ENCODE measurements at regions of chr5 and their contacts with region 1.

Region 1: DNA sequence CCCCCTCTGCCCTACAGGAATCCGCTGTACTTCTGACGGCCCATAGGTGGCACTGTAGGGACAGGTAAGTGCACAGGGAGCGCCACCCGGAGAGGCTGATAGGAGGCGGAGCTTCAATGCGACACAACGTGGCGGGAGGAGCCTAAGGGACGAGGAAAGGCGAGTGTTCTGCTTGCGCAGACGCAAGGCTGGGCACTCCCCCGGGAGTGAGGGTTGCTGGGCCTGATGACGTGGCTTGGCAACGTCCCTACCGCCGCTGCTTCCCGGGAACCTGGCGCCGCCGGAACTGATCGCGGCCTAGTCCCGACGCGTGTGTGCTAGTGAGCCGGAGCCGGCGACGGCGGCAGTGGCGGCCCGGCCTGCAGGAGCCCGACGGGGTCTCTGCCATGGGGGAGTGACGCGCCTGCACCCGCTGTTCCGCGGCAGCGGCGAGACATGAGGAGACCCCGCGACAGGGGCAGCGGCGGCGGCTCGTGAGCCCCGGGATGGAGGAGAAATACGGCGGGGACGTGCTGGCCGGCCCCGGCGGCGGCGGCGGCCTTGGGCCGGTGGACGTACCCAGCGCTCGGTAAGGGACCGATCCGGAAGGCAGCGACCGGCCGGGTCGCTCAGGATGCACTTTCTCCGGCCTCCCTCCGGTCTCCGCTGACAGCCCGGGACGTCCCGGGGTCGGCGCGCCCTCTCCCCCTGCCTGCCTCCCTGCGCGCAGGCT is at the start of gene SLC30A5:
- DNase-seq: peak; percentile 99
- H3K4me3 Mint-ChIP-seq: peak within 1 kb of the TSS; percentile 86
- H3K27ac Mint-ChIP-seq: peak within 1 kb of the TSS; percentile 92
- H3K4me1 Mint-ChIP-seq: peaks cover 16% of the 10 kb centered on the region
- H3K27me3 Mint-ChIP-seq: no peaks in the 10 kb centered on the region
- CTCF ChIP-seq: peak; percentile 89
- total RNA-seq, gene SLC30A5: 61.8 and 73.8 TPM in 2 replicates

Region 2: GRCh38 chr5:68798877-68799843 is 294.8 kb before region 1 on chr5:
- CTCF ChIA-PET with region 1: no interaction called
- POLR2A ChIA-PET with region 1: no interaction called
- intact Hi-C with region 1: no loop called
- DNase-seq: no peak
- H3K4me3 Mint-ChIP-seq: no peak overlapping the region
- H3K27ac Mint-ChIP-seq: no peak overlapping the region
- H3K4me1 Mint-ChIP-seq: no peaks in the 10 kb centered on the region
- H3K27me3 Mint-ChIP-seq: peaks cover 23% of the 10 kb centered on the region
- CTCF ChIP-seq: no peak

Region 3: DNA sequence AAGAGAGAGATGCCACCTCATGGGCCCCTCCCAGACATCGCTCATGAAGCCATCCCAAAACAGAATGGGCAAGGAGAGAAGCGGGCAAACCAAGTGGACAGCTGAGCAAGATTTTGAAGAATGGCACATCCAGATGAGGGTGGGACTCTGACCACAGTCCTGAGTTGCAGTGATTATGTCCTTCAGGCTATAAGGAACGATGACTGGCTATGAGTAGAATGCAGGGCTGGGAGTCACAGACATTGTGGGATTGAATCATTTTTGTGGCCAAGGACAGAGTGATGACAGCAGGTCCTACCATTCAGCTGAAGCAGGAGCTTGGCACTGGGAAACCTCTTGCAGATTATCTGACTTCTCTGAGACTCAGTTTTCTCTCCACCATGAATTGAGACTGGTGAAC is 245.8 kb before region 1 on chr5:
- CTCF ChIA-PET with region 1: no interaction called
- POLR2A ChIA-PET with region 1: no interaction called
- intact Hi-C with region 1: no loop called
- DNase-seq: peak; percentile 33
- H3K4me3 Mint-ChIP-seq: no peak overlapping the region
- H3K27ac Mint-ChIP-seq: no peak overlapping the region
- H3K4me1 Mint-ChIP-seq: peaks cover 9% of the 10 kb centered on the region
- H3K27me3 Mint-ChIP-seq: peaks cover 41% of the 10 kb centered on the region
- CTCF ChIP-seq: no peak

Region 4: GRCh38 chr5:69024241-69024651 is 69.7 kb before region 1 on chr5:
- CTCF ChIA-PET with region 1: no interaction called
- POLR2A ChIA-PET with region 1: interaction called, 7 read pairs
- intact Hi-C with region 1: loop called (anchors 5 kb)
- DNase-seq: peak; percentile 74
- H3K4me3 Mint-ChIP-seq: no peak overlapping the region
- H3K27ac Mint-ChIP-seq: no peak overlapping the region
- H3K4me1 Mint-ChIP-seq: no peaks in the 10 kb centered on the region
- H3K27me3 Mint-ChIP-seq: peaks cover 32% of the 10 kb centered on the region
- CTCF ChIP-seq: peak; percentile 69

Region 5: GRCh38 chr5:69083412-69083811 is 10.5 kb before region 1 on chr5:
- CTCF ChIA-PET with region 1: interaction called, 11 read pairs
- POLR2A ChIA-PET with region 1: interaction called, 5 read pairs
- intact Hi-C with region 1: no loop called
- DNase-seq: peak; percentile 63
- H3K4me3 Mint-ChIP-seq: no peak overlapping the region
- H3K27ac Mint-ChIP-seq: no peak overlapping the region
- H3K4me1 Mint-ChIP-seq: peaks cover 14% of the 10 kb centered on the region
- H3K27me3 Mint-ChIP-seq: no peaks in the 10 kb centered on the region
- CTCF ChIP-seq: no peak

Region 6: DNA sequence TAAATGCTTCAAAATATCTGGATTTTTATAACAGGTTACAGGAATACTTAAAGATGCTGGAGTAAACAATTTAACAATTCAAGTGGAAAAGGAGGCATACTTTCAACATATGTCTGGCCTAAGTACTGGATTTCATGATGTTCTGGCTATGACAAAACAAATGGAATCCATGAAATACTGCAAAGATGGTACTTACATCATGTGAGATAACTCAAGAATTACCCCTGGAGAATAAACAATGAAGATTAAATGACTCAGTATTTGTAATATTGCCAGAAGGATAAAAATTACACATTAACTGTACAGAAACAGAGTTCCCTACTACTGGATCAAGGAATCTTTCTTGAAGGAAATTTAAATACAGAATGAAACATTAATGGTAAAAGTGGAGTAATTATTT is 35.5 kb after region 1 on chr5:
- CTCF ChIA-PET with region 1: no interaction called
- POLR2A ChIA-PET with region 1: no interaction called
- intact Hi-C with region 1: no loop called
- DNase-seq: peak; percentile 45
- H3K4me3 Mint-ChIP-seq: no peak overlapping the region
- H3K27ac Mint-ChIP-seq: no peak overlapping the region
- H3K4me1 Mint-ChIP-seq: no peaks in the 10 kb centered on the region
- H3K27me3 Mint-ChIP-seq: no peaks in the 10 kb centered on the region
- CTCF ChIP-seq: no peak

Region 7: GRCh38 chr5:69189162-69190086 is 95.5 kb after region 1 on chr5 and contains the start of gene CENPH:
- CTCF ChIA-PET with region 1: interaction called, 5 read pairs
- POLR2A ChIA-PET with region 1: interaction called, 21 read pairs
- intact Hi-C with region 1: loop called (anchors 1 kb)
- DNase-seq: peak; percentile 92
- H3K4me3 Mint-ChIP-seq: peak within 1 kb of the TSS; percentile 96
- H3K27ac Mint-ChIP-seq: peak within 1 kb of the TSS; percentile 99
- H3K4me1 Mint-ChIP-seq: no peaks in the 10 kb centered on the region
- H3K27me3 Mint-ChIP-seq: no peaks in the 10 kb centered on the region
- CTCF ChIP-seq: no peak
- total RNA-seq, gene CENPH: 14.1 and 21.9 TPM in 2 replicates

Region 8: DNA sequence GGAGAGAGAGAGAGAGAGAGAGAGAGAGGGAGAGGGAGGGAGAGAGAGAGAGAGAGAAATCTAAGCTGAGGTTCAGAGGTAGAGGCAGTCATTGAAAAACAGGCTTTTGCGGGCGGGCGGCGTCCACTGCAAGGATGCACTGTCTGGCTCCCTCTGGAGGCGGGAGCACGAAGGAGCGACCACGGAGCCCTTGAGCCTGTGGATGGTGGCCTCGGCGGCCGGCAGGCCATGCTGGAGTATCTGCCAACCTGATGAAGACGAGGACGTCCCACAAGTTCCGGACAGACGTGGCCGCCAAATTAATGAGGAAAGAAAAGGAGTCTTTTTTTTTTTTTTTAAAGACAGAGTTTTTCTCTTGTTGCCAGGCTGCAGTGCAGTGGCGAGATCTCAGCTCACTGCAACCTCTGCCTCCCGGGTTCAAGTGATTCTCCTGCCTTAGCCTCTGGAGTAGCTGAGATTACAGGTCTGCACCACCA is 240.9 kb after region 1 on chr5:
- CTCF ChIA-PET with region 1: interaction called, 9 read pairs
- POLR2A ChIA-PET with region 1: no interaction called
- intact Hi-C with region 1: loop called (anchors 10 kb)
- DNase-seq: peak; percentile 82
- H3K4me3 Mint-ChIP-seq: no peak overlapping the region
- H3K27ac Mint-ChIP-seq: no peak overlapping the region
- H3K4me1 Mint-ChIP-seq: peaks cover 8% of the 10 kb centered on the region
- H3K27me3 Mint-ChIP-seq: no peaks in the 10 kb centered on the region
- CTCF ChIP-seq: peak; percentile 69